CD8-positive, alpha-beta T cell (primary cell): ENCODE measurements at regions of chr11 and their contacts with region 1.

Region 1: DNA sequence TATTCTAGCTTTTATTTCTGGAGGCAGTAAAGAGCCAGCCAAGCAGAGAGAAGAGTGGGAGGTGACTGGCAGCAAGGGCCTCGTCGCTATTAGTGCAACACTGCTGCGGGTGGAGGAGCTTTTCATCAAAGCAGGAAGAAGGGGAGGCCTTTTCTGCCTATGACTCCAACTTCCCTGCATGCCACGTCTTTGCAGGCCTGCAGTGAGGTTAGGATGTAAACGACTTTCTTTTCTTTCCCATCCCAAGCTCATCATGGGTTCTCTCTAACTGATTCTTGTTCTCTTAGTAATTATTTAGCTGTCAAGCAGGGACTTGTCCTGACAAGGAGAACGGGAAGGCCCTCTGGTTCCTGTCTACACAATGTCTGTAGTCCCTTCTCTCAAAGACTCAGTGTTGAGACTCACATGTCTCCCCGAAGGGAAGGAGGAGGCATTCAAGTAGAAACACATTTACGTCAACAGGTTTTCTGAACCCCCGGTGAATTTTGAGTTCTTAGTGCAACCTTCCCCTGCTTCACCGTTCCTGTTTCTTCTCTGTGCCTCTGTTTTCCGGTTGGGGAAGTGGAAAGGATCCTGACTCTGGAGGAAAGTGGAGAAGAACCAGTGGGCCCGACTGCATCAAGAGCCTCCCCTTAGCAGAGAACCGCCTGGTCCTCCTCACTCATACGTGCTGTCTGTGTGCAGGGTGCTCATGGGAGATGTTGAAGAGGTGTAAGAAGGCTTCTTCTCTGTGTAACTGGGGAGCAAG is 56.9 kb downstream of the PACS1 start:
- DNase-seq: peak; percentile 18 to 79 (median 61)
- ATAC-seq: peak; percentile 94
- H3K4me3 ChIP-seq: peak overlapping the region; percentile 2 to 6
- H3K4me3 Mint-ChIP-seq: peak overlapping the region; percentile 78
- H3K27ac ChIP-seq: peak overlapping the region; percentile 37 to 73
- H3K27ac Mint-ChIP-seq: peak overlapping the region; percentile 99
- H3K4me1 ChIP-seq: peaks cover 70% of the 10 kb centered on the region
- H3K4me1 Mint-ChIP-seq: peaks cover 80% of the 10 kb centered on the region
- H3K27me3 ChIP-seq: no peaks in the 10 kb centered on the region
- H3K27me3 Mint-ChIP-seq: no peaks in the 10 kb centered on the region
- CTCF ChIP-seq: no peak

Region 2: DNA sequence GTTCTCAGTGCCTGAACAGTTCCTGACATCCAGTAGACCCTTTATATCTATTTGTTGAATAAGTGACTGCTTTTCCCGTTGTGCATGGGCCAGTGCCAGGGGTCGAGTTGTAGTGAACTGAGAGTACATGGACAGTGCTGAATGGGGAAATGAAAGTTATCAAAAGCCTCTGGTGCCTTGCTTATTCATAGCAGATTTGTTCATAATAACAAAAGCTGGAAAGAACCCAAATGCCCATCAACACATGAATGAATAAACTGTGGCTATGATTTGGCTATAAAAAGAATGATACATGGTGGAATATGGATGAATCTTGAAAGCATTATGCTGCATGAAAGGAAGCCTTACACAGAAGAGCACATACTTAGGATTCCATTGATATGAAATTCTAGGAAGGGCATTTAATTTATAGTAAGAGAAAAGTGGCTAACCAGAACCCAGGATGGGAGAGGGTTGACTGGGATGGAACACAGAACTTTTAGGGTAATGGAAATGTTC is 14.3 kb before region 1 on chr11:
- CTCF ChIA-PET with region 1: interaction called, 16 read pairs
- POLR2A ChIA-PET with region 1: interaction called, 6 read pairs
- intact Hi-C with region 1: loop called in 1 of 2 experiments (anchors 2 kb)
- DNase-seq: no peak
- ATAC-seq: no peak
- H3K4me3 ChIP-seq: no peak overlapping the region
- H3K4me3 Mint-ChIP-seq: peak overlapping the region; percentile 38
- H3K27ac ChIP-seq: peak overlapping the region in 1 of 2 experiments; percentile 47
- H3K27ac Mint-ChIP-seq: peak overlapping the region; percentile 89
- H3K4me1 ChIP-seq: peaks cover 88% of the 10 kb centered on the region
- H3K4me1 Mint-ChIP-seq: peaks cover 94% of the 10 kb centered on the region
- H3K27me3 ChIP-seq: no peaks in the 10 kb centered on the region
- H3K27me3 Mint-ChIP-seq: no peaks in the 10 kb centered on the region
- CTCF ChIP-seq: no peak

Region 3: GRCh38 chr11:66150140-66150539 is 23.2 kb after region 1 on chr11:
- CTCF ChIA-PET with region 1: no interaction called
- POLR2A ChIA-PET with region 1: no interaction called
- intact Hi-C with region 1: no loop called
- DNase-seq: no peak
- ATAC-seq: no peak
- H3K4me3 ChIP-seq: no peak overlapping the region
- H3K4me3 Mint-ChIP-seq: no peak overlapping the region
- H3K27ac ChIP-seq: no peak overlapping the region
- H3K27ac Mint-ChIP-seq: no peak overlapping the region
- H3K4me1 ChIP-seq: peaks cover 6% of the 10 kb centered on the region
- H3K4me1 Mint-ChIP-seq: peaks cover 46% of the 10 kb centered on the region
- H3K27me3 ChIP-seq: no peaks in the 10 kb centered on the region
- H3K27me3 Mint-ChIP-seq: no peaks in the 10 kb centered on the region
- CTCF ChIP-seq: no peak